ENCODE measurements at regions of chrX and their contacts with region 1.

Region 1: GRCh38 chrX:40468033-40468846 is 112.5 kb upstream of the ATP6AP2 start:
- DNase-seq: peak; percentile 47
- ATAC-seq: peak; percentile 93
- H3K4me3 ChIP-seq: no peak overlapping the region
- H3K27ac ChIP-seq: no peak overlapping the region
- H3K4me1 ChIP-seq: peaks cover under 1% of the 10 kb centered on the region; the same call in 1 of the 2 replicates
- H3K27me3 ChIP-seq: no peaks in the 10 kb centered on the region
- CTCF ChIP-seq: peak; percentile 40 to 60 (median 42); a peak in 4 of 6 replicates
- EP300 ChIP-seq: no peak
- POLR2A ChIP-seq: no peak
- RAD21 ChIP-seq: peak; percentile 68

Region 2: GRCh38 chrX:39730662-39731397 is 737.4 kb before region 1 on chrX:
- CTCF ChIA-PET with region 1: interaction called, 4 read pairs
- POLR2A ChIA-PET with region 1: no interaction called
- RAD21 ChIA-PET with region 1: interaction called, 4 read pairs
- SMC1A ChIA-PET with region 1: interaction called, 4 read pairs
- in situ Hi-C with region 1: no loop called
- intact Hi-C with region 1: loop called (anchors 10 kb)
- DNase-seq: no peak
- ATAC-seq: peak; percentile 91
- H3K4me3 ChIP-seq: no peak overlapping the region
- H3K27ac ChIP-seq: no peak overlapping the region
- H3K4me1 ChIP-seq: no peaks in the 10 kb centered on the region
- H3K27me3 ChIP-seq: peaks cover 1 to 3% of the 10 kb centered on the region in 2 experiments; a peak in 2 of 4 replicates
- CTCF ChIP-seq: peak; percentile 55 to 60 (median 56)
- EP300 ChIP-seq: no peak
- POLR2A ChIP-seq: no peak
- RAD21 ChIP-seq: peak; percentile 75

Region 3: GRCh38 chrX:40097497-40098263 is 370.6 kb before region 1 on chrX and contains the start of gene BCOR:
- CTCF ChIA-PET with region 1: no interaction called
- POLR2A ChIA-PET with region 1: no interaction called
- RAD21 ChIA-PET with region 1: no interaction called
- SMC1A ChIA-PET with region 1: no interaction called
- in situ Hi-C with region 1: no loop called
- intact Hi-C with region 1: loop called (anchors 10 kb)
- DNase-seq: no peak
- ATAC-seq: peak; percentile 18
- H3K4me3 ChIP-seq: peak within 1 kb of the TSS; percentile 72
- H3K27ac ChIP-seq: peak within 1 kb of the TSS; percentile 74
- H3K4me1 ChIP-seq: peaks cover 4% of the 10 kb centered on the region; the same call in 1 of the 2 replicates
- H3K27me3 ChIP-seq: no peaks in the 10 kb centered on the region
- CTCF ChIP-seq: no peak
- EP300 ChIP-seq: no peak
- POLR2A ChIP-seq: peak; percentile 90
- RAD21 ChIP-seq: no peak
- polyA plus RNA-seq, gene BCOR: 5.1 to 8.0 TPM

Region 4: GRCh38 chrX:40266490-40267333 is 201.5 kb before region 1 on chrX:
- CTCF ChIA-PET with region 1: no interaction called
- POLR2A ChIA-PET with region 1: no interaction called
- RAD21 ChIA-PET with region 1: interaction called, 3 read pairs
- SMC1A ChIA-PET with region 1: no interaction called
- in situ Hi-C with region 1: no loop called
- intact Hi-C with region 1: loop called (anchors 5 kb)
- DNase-seq: no peak
- ATAC-seq: peak; percentile 79
- H3K4me3 ChIP-seq: peak overlapping the region; percentile 41; the same call in 1 of the 2 replicates
- H3K27ac ChIP-seq: peak overlapping the region; percentile 52
- H3K4me1 ChIP-seq: peaks cover 14% of the 10 kb centered on the region
- H3K27me3 ChIP-seq: no peaks in the 10 kb centered on the region
- CTCF ChIP-seq: peak; percentile 51 to 55 (median 51)
- EP300 ChIP-seq: no peak
- POLR2A ChIP-seq: no peak
- RAD21 ChIP-seq: peak; percentile 69

Region 5: GRCh38 chrX:40314070-40314469 is 154.2 kb before region 1 on chrX:
- CTCF ChIA-PET with region 1: interaction called, 3 read pairs
- POLR2A ChIA-PET with region 1: no interaction called
- RAD21 ChIA-PET with region 1: interaction called, 4 read pairs
- SMC1A ChIA-PET with region 1: interaction called, 3 read pairs
- in situ Hi-C with region 1: no loop called
- intact Hi-C with region 1: loop called (anchors 5 kb)
- DNase-seq: no peak
- ATAC-seq: peak; percentile 37; the same call in 1 of the 3 replicates
- H3K4me3 ChIP-seq: no peak overlapping the region
- H3K27ac ChIP-seq: no peak overlapping the region
- H3K4me1 ChIP-seq: no peaks in the 10 kb centered on the region
- H3K27me3 ChIP-seq: no peaks in the 10 kb centered on the region
- CTCF ChIP-seq: peak in 2 of 3 experiments; percentile 11 to 29; a peak in 1 of 6 replicates
- EP300 ChIP-seq: no peak
- POLR2A ChIP-seq: no peak
- RAD21 ChIP-seq: 0 out of 2 replicates have a peak, but pooled peaks have one; percentile 11